IMR-90 (cell line): ENCODE measurements at regions of chr1 and their contacts with region 1.

Region 1: GRCh38 chr1:94854458-94855306 is 34.5 kb downstream of the SLC44A3 start:
- DNase-seq: peak; percentile 92
- ATAC-seq: peak; percentile 96
- H3K4me3 ChIP-seq: peak overlapping the region; percentile 41
- H3K27ac ChIP-seq: peak overlapping the region; percentile 38
- H3K4me1 ChIP-seq: peaks cover 5% of the 10 kb centered on the region
- H3K27me3 ChIP-seq: no peaks in the 10 kb centered on the region
- CTCF ChIP-seq: peak; percentile 97
- POLR2A ChIP-seq: peak; percentile 54; the same call in 1 of the 2 replicates
- RAD21 ChIP-seq: peak; percentile 97

Region 2: DNA sequence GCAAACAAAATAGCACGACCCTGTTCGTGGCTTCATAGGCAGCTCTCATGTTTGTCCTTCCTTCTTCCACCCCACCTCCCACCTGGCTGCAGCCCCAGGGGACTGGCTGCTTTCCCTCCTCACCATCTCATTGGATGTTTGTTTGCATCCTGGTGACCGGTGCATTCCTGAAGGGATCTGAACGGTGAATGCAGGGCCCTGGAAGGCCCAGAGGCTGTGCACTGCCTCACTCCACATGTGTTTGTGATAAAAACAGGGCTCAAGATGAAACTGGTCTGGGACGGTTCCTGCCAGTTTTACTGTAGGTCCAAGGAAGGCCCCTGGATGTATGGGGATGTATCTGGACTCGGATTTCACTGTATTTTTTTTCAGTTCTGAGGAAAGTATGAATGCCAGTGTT is 29.4 kb after region 1 on chr1:
- CTCF ChIA-PET with region 1: interaction called, 6 read pairs
- POLR2A ChIA-PET with region 1: no interaction called
- dilution Hi-C with region 1: no loop called
- in situ Hi-C with region 1: no loop called
- intact Hi-C with region 1: loop called (anchors 2 kb)
- DNase-seq: peak; percentile 76
- ATAC-seq: peak; percentile 90
- H3K4me3 ChIP-seq: no peak overlapping the region
- H3K27ac ChIP-seq: peak overlapping the region; percentile 89
- H3K4me1 ChIP-seq: peaks cover 8% of the 10 kb centered on the region
- H3K27me3 ChIP-seq: no peaks in the 10 kb centered on the region
- CTCF ChIP-seq: no peak
- POLR2A ChIP-seq: no peak
- RAD21 ChIP-seq: no peak

Region 3: GRCh38 chr1:94903280-94904009 is 48.8 kb after region 1 on chr1:
- CTCF ChIA-PET with region 1: interaction called, 7 read pairs
- POLR2A ChIA-PET with region 1: no interaction called
- dilution Hi-C with region 1: no loop called
- in situ Hi-C with region 1: loop called (anchors 5 kb)
- intact Hi-C with region 1: loop called (anchors 5 kb)
- DNase-seq: peak; percentile 49
- ATAC-seq: no peak
- H3K4me3 ChIP-seq: no peak overlapping the region
- H3K27ac ChIP-seq: peak overlapping the region; percentile 39; the same call in 1 of the 2 replicates
- H3K4me1 ChIP-seq: peaks cover 26% of the 10 kb centered on the region
- H3K27me3 ChIP-seq: no peaks in the 10 kb centered on the region
- CTCF ChIP-seq: no peak
- POLR2A ChIP-seq: no peak
- RAD21 ChIP-seq: no peak

Region 4: GRCh38 chr1:94909486-94909885 is 54.8 kb after region 1 on chr1:
- CTCF ChIA-PET with region 1: interaction called, 7 read pairs
- POLR2A ChIA-PET with region 1: no interaction called
- dilution Hi-C with region 1: no loop called
- in situ Hi-C with region 1: loop called (anchors 5 kb)
- intact Hi-C with region 1: no loop called
- DNase-seq: no peak
- ATAC-seq: no peak
- H3K4me3 ChIP-seq: no peak overlapping the region
- H3K27ac ChIP-seq: no peak overlapping the region
- H3K4me1 ChIP-seq: peaks cover 33% of the 10 kb centered on the region
- H3K27me3 ChIP-seq: no peaks in the 10 kb centered on the region
- CTCF ChIP-seq: no peak
- POLR2A ChIP-seq: no peak
- RAD21 ChIP-seq: no peak

Region 5: DNA sequence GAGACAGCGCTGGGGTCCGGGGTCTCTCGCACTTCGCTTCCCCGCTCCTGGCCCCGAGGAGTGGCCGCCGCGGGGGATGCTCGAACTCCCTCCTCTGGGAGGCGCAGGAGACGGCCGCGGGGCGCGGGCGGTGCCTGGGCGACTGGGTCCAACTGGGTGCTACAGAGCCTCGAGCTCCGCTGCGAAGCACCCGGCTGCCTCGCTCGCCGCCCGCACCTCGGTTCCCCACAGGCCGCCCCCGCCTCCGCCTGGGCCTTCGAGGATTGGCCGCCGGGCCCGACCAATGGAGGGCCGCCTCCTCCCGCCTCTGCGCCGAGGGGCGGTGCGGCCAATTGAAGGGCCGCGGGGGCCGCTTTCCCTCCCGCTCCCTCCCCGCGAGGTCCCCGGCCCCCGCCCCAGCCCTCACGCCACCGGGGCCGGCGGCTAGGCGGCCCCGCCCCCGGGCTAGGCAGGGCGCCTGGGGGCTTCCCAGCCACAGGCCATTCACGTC is 72.3 kb after region 1 on chr1 and contains the start of gene CNN3:
- CTCF ChIA-PET with region 1: interaction called, 7 read pairs
- POLR2A ChIA-PET with region 1: interaction called, 5 read pairs
- dilution Hi-C with region 1: no loop called
- in situ Hi-C with region 1: no loop called
- intact Hi-C with region 1: loop called (anchors 1 kb)
- DNase-seq: peak; percentile 92
- ATAC-seq: peak; percentile 91
- H3K4me3 ChIP-seq: peak within 1 kb of the TSS; percentile 63
- H3K27ac ChIP-seq: peak within 1 kb of the TSS; percentile 93
- H3K4me1 ChIP-seq: peaks cover 23% of the 10 kb centered on the region
- H3K27me3 ChIP-seq: no peaks in the 10 kb centered on the region
- CTCF ChIP-seq: peak; percentile 9; the same call in 1 of the 2 replicates
- POLR2A ChIP-seq: peak; percentile 97
- RAD21 ChIP-seq: peak; percentile 17; the same call in 1 of the 2 replicates
- total RNA-seq, gene CNN3: 552 and 592 TPM in 2 replicates